ENCODE measurements at regions of chr3 and their contacts with region 1.

Region 1: GRCh38 chr3:147191795-147192385 is 214.5 kb downstream of the ZIC4 start:
- DNase-seq: peak; percentile 42
- ATAC-seq: no peak; the same call in 1 of the 2 replicates
- H3K4me3 ChIP-seq: no peak overlapping the region
- H3K27ac ChIP-seq: no peak overlapping the region
- H3K4me1 ChIP-seq: no peaks in the 10 kb centered on the region
- H3K27me3 ChIP-seq: no peaks in the 10 kb centered on the region
- CTCF ChIP-seq: peak; percentile 82

Region 2: GRCh38 chr3:146640955-146641867 is 550.7 kb before region 1 on chr3:
- CTCF ChIA-PET with region 1: no interaction called
- POLR2A ChIA-PET with region 1: no interaction called
- in situ Hi-C with region 1: no loop called
- intact Hi-C with region 1: loop called (anchors 1 kb)
- DNase-seq: no peak
- ATAC-seq: peak; percentile 91
- H3K4me3 ChIP-seq: no peak overlapping the region
- H3K27ac ChIP-seq: no peak overlapping the region
- H3K4me1 ChIP-seq: no peaks in the 10 kb centered on the region
- H3K27me3 ChIP-seq: no peaks in the 10 kb centered on the region; the same call in 1 of the 2 replicates
- CTCF ChIP-seq: peak; percentile 81; the same call in 1 of the 2 replicates

Region 3: GRCh38 chr3:146817704-146818103 is 374.2 kb before region 1 on chr3:
- CTCF ChIA-PET with region 1: no interaction called
- POLR2A ChIA-PET with region 1: no interaction called
- in situ Hi-C with region 1: no loop called
- intact Hi-C with region 1: loop called (anchors 5 kb)
- DNase-seq: no peak
- ATAC-seq: no peak; the same call in 1 of the 2 replicates
- H3K4me3 ChIP-seq: no peak overlapping the region
- H3K27ac ChIP-seq: no peak overlapping the region
- H3K4me1 ChIP-seq: no peaks in the 10 kb centered on the region
- H3K27me3 ChIP-seq: no peaks in the 10 kb centered on the region
- CTCF ChIP-seq: peak; percentile 54; the same call in 1 of the 2 replicates